ENCODE measurements at regions of chr4 and their contacts with region 1.

Region 1: DNA sequence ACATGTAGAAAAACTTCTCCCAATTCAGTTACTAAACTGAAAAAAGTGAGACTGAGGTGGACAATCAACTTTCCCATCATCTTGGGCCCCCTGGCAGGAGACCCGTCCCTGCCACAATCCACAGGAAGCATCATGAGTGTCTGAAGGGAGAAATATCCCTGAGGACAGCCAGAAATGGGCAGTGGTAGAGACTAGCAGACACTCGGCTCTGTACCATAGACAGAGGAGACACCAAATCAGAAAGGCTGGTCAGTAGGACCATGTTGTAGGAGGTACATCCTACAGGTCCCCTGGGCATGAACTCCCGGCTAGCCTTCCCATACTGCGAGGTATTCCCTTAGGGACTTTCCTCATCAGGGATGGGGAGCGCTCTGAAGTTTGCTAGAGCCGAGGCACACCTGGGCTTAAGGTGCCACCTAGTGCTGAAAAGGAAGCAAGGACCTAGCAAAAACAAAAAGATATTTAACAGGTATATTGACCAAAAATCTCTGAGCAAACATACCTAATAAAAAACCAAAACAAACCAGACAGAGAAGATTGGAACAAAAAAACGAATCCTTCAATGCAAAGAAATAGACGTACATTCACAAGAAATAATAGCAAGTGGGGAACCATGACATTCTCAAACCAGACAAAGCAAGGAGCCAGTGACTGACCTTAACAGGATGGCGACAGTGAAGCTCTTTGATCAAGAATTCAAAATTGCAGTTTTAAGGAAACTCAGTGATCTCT is 55.6 kb downstream of the HAUS3 start:
- DNase-seq: peak; percentile 58
- H3K4me3 ChIP-seq: no peak overlapping the region
- H3K27ac ChIP-seq: no peak overlapping the region
- H3K4me1 ChIP-seq: no peaks in the 10 kb centered on the region
- H3K27me3 ChIP-seq: no peaks in the 10 kb centered on the region
- CTCF ChIP-seq: peak; percentile 53 to 82

Region 2: DNA sequence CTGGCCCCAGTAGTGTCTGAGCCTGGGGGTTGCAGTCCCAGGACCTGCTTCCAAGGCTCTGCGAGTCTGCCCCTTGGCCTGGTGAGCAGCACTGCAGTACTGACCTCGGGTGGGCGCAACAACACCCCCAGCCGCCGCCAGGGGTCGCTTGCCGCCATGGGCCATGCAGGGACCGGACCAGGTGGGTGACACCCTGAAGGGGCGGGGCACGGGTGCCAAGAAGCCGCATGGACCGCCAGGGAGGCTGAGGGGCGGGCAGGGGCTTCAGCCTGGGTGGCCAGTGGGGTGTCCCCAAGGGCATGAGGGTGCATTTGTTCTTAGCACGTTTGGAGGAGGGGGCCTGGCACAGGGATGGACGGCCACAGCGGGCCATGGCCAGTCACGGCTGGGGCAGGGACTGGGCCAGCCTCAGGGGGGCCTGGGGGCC is 440.0 kb before region 1 on chr4:
- CTCF ChIA-PET with region 1: no interaction called
- dilution Hi-C with region 1: no loop called
- in situ Hi-C with region 1: loop called in 1 of 2 experiments (anchors 25 kb)
- intact Hi-C with region 1: loop called (anchors 1 kb)
- DNase-seq: no peak
- H3K4me3 ChIP-seq: no peak overlapping the region
- H3K27ac ChIP-seq: no peak overlapping the region
- H3K4me1 ChIP-seq: peaks cover under 1% of the 10 kb centered on the region
- H3K27me3 ChIP-seq: no peaks in the 10 kb centered on the region
- CTCF ChIP-seq: peak; percentile 77 to 85

Region 3: GRCh38 chr4:1928356-1929239 is 257.7 kb before region 1 on chr4:
- CTCF ChIA-PET with region 1: no interaction called
- dilution Hi-C with region 1: no loop called
- in situ Hi-C with region 1: loop called (anchors 10 to 25 kb)
- intact Hi-C with region 1: no loop called
- DNase-seq: no peak
- H3K4me3 ChIP-seq: no peak overlapping the region
- H3K27ac ChIP-seq: peak overlapping the region; percentile 29
- H3K4me1 ChIP-seq: peaks cover 6% of the 10 kb centered on the region
- H3K27me3 ChIP-seq: no peaks in the 10 kb centered on the region
- CTCF ChIP-seq: no peak

Region 4: GRCh38 chr4:1992468-1993168 is 193.7 kb before region 1 on chr4:
- CTCF ChIA-PET with region 1: no interaction called
- dilution Hi-C with region 1: no loop called
- in situ Hi-C with region 1: no loop called
- intact Hi-C with region 1: no loop called
- DNase-seq: no peak
- H3K4me3 ChIP-seq: peak overlapping the region in 2 of 3 experiments; percentile 8 to 47
- H3K27ac ChIP-seq: no peak overlapping the region
- H3K4me1 ChIP-seq: peaks cover 16% of the 10 kb centered on the region
- H3K27me3 ChIP-seq: no peaks in the 10 kb centered on the region
- CTCF ChIP-seq: peak; percentile 50 to 67

Region 5: DNA sequence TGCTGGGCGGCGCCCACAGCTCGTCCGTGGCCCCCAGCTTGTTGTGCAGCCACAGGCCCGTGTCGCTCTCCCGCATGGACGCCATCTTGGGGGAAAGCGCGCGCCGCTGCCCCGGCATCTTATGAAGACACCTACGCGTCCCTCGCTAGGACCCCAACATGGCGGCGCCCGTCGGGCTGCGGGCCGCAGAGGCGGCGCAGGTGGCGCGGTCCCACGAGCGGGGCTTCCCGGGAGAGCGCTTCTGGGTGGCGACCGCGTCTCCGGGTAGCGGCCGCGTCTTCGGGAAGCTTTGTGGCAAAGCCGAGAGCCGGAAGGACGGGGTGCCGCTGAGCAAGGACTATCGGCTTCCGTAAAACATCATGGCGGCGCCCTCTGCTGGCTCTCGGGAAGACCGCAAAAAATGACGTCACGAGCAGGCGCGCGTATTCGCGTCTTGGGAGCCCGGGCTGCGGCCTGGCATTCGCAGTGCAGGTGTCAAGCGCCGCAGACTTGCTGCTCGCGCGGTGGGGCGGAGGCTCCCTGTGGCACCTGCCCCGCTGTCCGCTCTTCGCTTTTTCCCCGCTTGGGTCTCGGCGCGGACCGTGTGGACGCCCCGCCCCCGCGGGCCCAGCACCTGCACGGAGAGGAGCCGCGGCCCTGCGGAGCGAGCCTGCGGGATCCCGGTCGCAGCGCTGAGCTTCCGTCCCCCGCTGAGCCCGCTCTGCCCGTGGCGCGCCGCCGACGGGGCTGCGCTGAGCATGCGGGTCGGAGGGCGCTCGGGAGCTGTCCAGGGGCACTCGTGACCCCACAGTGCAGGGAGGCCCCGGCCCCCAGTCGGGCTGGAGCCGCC is 177.2 kb before region 1 on chr4 and contains the start of gene NELFA:
- CTCF ChIA-PET with region 1: no interaction called
- dilution Hi-C with region 1: no loop called
- in situ Hi-C with region 1: no loop called
- intact Hi-C with region 1: loop called (anchors 1 kb)
- DNase-seq: peak; percentile 92
- H3K4me3 ChIP-seq: peak within 1 kb of the TSS; percentile 95 to 99 (median 99)
- H3K27ac ChIP-seq: peak within 1 kb of the TSS; percentile 90
- H3K4me1 ChIP-seq: peaks cover 17% of the 10 kb centered on the region
- H3K27me3 ChIP-seq: no peaks in the 10 kb centered on the region
- CTCF ChIP-seq: no peak
- total RNA-seq, gene NELFA: 19.7 to 26.1 TPM

Region 6: GRCh38 chr4:2412885-2413716 is 226.8 kb after region 1 on chr4:
- CTCF ChIA-PET with region 1: no interaction called
- dilution Hi-C with region 1: no loop called
- in situ Hi-C with region 1: no loop called
- intact Hi-C with region 1: no loop called
- DNase-seq: peak; percentile 92
- H3K4me3 ChIP-seq: peak overlapping the region; percentile 3 to 30 (median 16)
- H3K27ac ChIP-seq: peak overlapping the region; percentile 63
- H3K4me1 ChIP-seq: peaks cover 31% of the 10 kb centered on the region
- H3K27me3 ChIP-seq: peaks cover 27% of the 10 kb centered on the region
- CTCF ChIP-seq: peak; percentile 31 to 56

Measured in mammary epithelial cell (primary cell).